ENCODE measurements at regions of chr18 and their contacts with region 1.

Region 1: GRCh38 chr18:25883091-25883490 is 207.3 kb downstream of the SS18 start:
- DNase-seq: no peak
- ATAC-seq: no peak
- H3K4me3 ChIP-seq: no peak overlapping the region
- H3K27ac ChIP-seq: no peak overlapping the region
- H3K4me1 ChIP-seq: no peaks in the 10 kb centered on the region
- H3K27me3 ChIP-seq: no peaks in the 10 kb centered on the region
- CTCF ChIP-seq: no peak
- POLR2A ChIP-seq: no peak

Region 2: GRCh38 chr18:24446953-24447538 is 1436.0 kb before region 1 on chr18:
- in situ Hi-C with region 1: no loop called
- intact Hi-C with region 1: no loop called
- DNase-seq: no peak
- ATAC-seq: no peak
- H3K4me3 ChIP-seq: no peak overlapping the region
- H3K27ac ChIP-seq: no peak overlapping the region
- H3K4me1 ChIP-seq: no peaks in the 10 kb centered on the region
- H3K27me3 ChIP-seq: no peaks in the 10 kb centered on the region
- CTCF ChIP-seq: no peak
- POLR2A ChIP-seq: no peak

Region 3: DNA sequence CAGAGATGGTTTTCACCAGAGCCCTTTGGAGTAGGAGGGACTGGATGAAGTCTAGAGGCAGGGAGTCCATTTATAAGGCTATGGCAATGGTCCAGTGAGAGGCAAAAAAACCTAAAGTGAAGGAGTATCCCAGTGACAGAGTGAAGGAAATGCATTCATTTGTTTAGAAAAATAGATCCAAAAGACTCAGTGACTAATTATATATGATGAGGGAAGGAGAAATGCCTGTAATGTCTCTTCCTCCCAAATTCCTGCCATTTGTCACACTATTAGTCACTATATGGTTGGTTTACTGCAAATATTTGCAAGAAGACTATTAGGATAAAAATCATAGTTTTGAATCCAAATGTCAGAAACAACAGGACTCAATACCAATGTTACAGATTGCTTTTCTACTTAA is 635.4 kb before region 1 on chr18:
- in situ Hi-C with region 1: no loop called
- intact Hi-C with region 1: loop called (anchors 5 kb)
- DNase-seq: no peak
- ATAC-seq: no peak
- H3K4me3 ChIP-seq: no peak overlapping the region
- H3K27ac ChIP-seq: no peak overlapping the region
- H3K4me1 ChIP-seq: no peaks in the 10 kb centered on the region
- H3K27me3 ChIP-seq: no peaks in the 10 kb centered on the region
- CTCF ChIP-seq: no peak
- POLR2A ChIP-seq: no peak

Region 4: GRCh38 chr18:26040051-26040656 is 157.1 kb after region 1 on chr18:
- in situ Hi-C with region 1: no loop called
- intact Hi-C with region 1: no loop called
- DNase-seq: no peak
- ATAC-seq: no peak
- H3K4me3 ChIP-seq: no peak overlapping the region
- H3K27ac ChIP-seq: no peak overlapping the region
- H3K4me1 ChIP-seq: no peaks in the 10 kb centered on the region
- H3K27me3 ChIP-seq: no peaks in the 10 kb centered on the region
- CTCF ChIP-seq: no peak
- POLR2A ChIP-seq: no peak

Measured in gastrocnemius medialis (tissue), 4 donors.